Endothelial cell of umbilical vein (primary cell): ENCODE measurements at regions of chr4 and their contacts with region 1.

Region 1: DNA sequence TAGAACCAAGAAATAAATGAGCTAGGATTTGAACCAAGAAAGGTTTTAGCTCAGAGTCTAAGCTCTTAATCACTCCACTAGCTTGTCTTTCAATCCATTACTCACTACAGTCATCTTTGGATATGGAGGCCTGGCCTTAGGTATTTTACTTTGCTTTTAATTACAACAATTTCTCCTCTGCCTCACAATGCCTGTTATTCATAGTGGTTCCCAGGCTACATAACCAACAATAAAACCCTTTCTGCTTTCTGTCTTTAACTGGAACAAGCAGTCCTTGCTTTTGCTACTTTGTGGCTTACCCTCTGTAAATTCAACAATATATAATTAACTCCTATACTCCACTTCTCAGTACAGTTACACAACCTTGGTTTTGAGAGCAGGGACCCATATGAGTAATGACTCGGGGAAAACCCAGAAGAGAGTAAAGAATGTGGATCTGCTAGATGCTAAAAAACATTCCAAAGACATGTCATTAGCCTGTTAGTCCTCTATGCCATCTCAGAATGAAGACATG is 94.7 kb upstream of the NAP1L5 start:
- DNase-seq: no peak
- H3K4me3 ChIP-seq: no peak overlapping the region
- H3K27ac ChIP-seq: no peak overlapping the region
- H3K4me1 ChIP-seq: no peaks in the 10 kb centered on the region
- H3K27me3 ChIP-seq: no peaks in the 10 kb centered on the region
- CTCF ChIP-seq: no peak
- POLR2A ChIP-seq: no peak

Region 2: GRCh38 chr4:88523325-88524129 is 268.8 kb before region 1 on chr4 and contains the start of gene PYURF:
- CTCF ChIA-PET with region 1: interaction called, 72 read pairs
- POLR2A ChIA-PET with region 1: no interaction called
- dilution Hi-C with region 1: no loop called
- intact Hi-C with region 1: loop called (anchors 5 kb)
- DNase-seq: peak; percentile 95
- H3K4me3 ChIP-seq: peak within 1 kb of the TSS; percentile 91 to 93 (median 92)
- H3K27ac ChIP-seq: peak within 1 kb of the TSS; percentile 86
- H3K4me1 ChIP-seq: peaks cover 16% of the 10 kb centered on the region
- H3K27me3 ChIP-seq: no peaks in the 10 kb centered on the region
- CTCF ChIP-seq: no peak
- POLR2A ChIP-seq: peak; percentile 95
- total RNA-seq, gene PYURF: 79.7 and 81.8 TPM in 2 replicates

Region 3: DNA sequence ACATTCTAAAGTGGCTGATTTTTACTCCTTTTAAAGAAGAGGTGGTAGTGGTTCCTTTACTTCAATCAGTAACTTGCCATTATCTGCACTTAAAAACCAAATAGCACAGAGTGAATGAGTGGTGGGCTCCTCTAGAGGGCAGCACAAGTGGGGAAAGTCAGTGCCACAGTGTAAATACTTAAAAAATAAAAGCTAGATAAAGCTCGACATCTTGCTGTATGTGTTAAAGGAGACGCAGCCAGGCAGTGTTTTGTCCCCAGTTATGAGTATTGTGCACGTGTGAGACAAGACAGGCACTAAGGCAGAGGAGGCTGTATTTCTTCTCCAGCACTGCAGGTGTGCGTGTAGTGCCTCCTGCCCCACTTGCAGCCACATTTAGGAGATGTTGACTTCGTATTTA is 119.3 kb before region 1 on chr4:
- CTCF ChIA-PET with region 1: interaction called, 51 read pairs
- POLR2A ChIA-PET with region 1: no interaction called
- dilution Hi-C with region 1: no loop called
- intact Hi-C with region 1: loop called (anchors 2 kb)
- DNase-seq: peak; percentile 65
- H3K4me3 ChIP-seq: no peak overlapping the region
- H3K27ac ChIP-seq: no peak overlapping the region
- H3K4me1 ChIP-seq: no peaks in the 10 kb centered on the region
- H3K27me3 ChIP-seq: no peaks in the 10 kb centered on the region
- CTCF ChIP-seq: peak; percentile 56 to 74
- POLR2A ChIP-seq: no peak

Region 4: GRCh38 chr4:88706574-88706973 is 85.8 kb before region 1 on chr4:
- CTCF ChIA-PET with region 1: interaction called, 75 read pairs
- POLR2A ChIA-PET with region 1: no interaction called
- dilution Hi-C with region 1: no loop called
- intact Hi-C with region 1: loop called (anchors 1 kb)
- DNase-seq: peak; percentile 67
- H3K4me3 ChIP-seq: no peak overlapping the region
- H3K27ac ChIP-seq: no peak overlapping the region
- H3K4me1 ChIP-seq: no peaks in the 10 kb centered on the region
- H3K27me3 ChIP-seq: no peaks in the 10 kb centered on the region
- CTCF ChIP-seq: peak; percentile 32 to 58
- POLR2A ChIP-seq: no peak

Region 5: GRCh38 chr4:88728146-88728545 is 64.2 kb before region 1 on chr4:
- CTCF ChIA-PET with region 1: interaction called, 9 read pairs
- POLR2A ChIA-PET with region 1: no interaction called
- dilution Hi-C with region 1: no loop called
- intact Hi-C with region 1: loop called (anchors 5 kb)
- DNase-seq: no peak
- H3K4me3 ChIP-seq: no peak overlapping the region
- H3K27ac ChIP-seq: no peak overlapping the region
- H3K4me1 ChIP-seq: peaks cover 8% of the 10 kb centered on the region
- H3K27me3 ChIP-seq: no peaks in the 10 kb centered on the region
- CTCF ChIP-seq: no peak
- POLR2A ChIP-seq: no peak

Region 6: GRCh38 chr4:88759039-88759894 is 33.1 kb before region 1 on chr4:
- CTCF ChIA-PET with region 1: interaction called, 19 read pairs
- POLR2A ChIA-PET with region 1: no interaction called
- dilution Hi-C with region 1: no loop called
- intact Hi-C with region 1: no loop called
- DNase-seq: peak; percentile 52
- H3K4me3 ChIP-seq: no peak overlapping the region
- H3K27ac ChIP-seq: no peak overlapping the region
- H3K4me1 ChIP-seq: no peaks in the 10 kb centered on the region
- H3K27me3 ChIP-seq: no peaks in the 10 kb centered on the region
- CTCF ChIP-seq: no peak
- POLR2A ChIP-seq: no peak